Ovary (tissue), 10 donors: ENCODE measurements at regions of chr2 and their contacts with region 1.

Region 1: GRCh38 chr2:117828870-117829269 is 14.4 kb downstream of the DDX18 start:
- DNase-seq: no peak
- H3K4me3 ChIP-seq: no peak overlapping the region
- H3K27ac ChIP-seq: no peak overlapping the region
- H3K4me1 ChIP-seq: no peaks in the 10 kb centered on the region
- H3K27me3 ChIP-seq: no peaks in the 10 kb centered on the region
- CTCF ChIP-seq: no peak
- EP300 ChIP-seq: no peak
- POLR2A ChIP-seq: no peak

Region 2: DNA sequence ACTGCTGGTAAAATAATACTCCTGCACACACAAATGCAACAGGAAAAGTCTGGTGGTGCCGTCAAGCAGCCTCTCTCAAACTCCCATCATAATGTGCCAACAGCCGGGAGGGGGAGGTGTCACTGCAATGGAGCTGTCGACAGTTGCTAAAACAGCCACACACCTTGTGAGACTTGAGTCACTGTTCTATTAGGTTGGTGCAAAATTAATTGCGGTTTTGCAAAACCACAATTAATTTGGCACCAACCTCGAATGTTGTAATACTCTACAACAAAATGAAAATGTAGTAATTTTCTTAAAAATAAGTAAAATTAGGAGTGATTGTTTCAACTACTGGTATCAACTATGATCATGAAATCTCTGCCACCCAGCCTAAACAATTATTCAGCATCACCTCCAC is 17.9 kb after region 1 on chr2:
- intact Hi-C with region 1: loop called in 1 of 4 experiments (anchors 1 kb)
- DNase-seq: no peak
- H3K4me3 ChIP-seq: no peak overlapping the region
- H3K27ac ChIP-seq: no peak overlapping the region
- H3K4me1 ChIP-seq: no peaks in the 10 kb centered on the region
- H3K27me3 ChIP-seq: no peaks in the 10 kb centered on the region
- CTCF ChIP-seq: no peak
- EP300 ChIP-seq: no peak
- POLR2A ChIP-seq: no peak